MCF 10A (cell line): ENCODE measurements at regions of chr11 and their contacts with region 1.

Region 1: GRCh38 chr11:114262681-114263512 is 33.3 kb upstream of the NNMT start:
- DNase-seq: peak; percentile 51
- H3K4me3 Mint-ChIP-seq: no peak overlapping the region
- H3K27ac Mint-ChIP-seq: no peak overlapping the region
- H3K4me1 Mint-ChIP-seq: peaks cover 19% of the 10 kb centered on the region
- H3K27me3 Mint-ChIP-seq: no peaks in the 10 kb centered on the region
- CTCF ChIP-seq: peak; percentile 47

Region 2: DNA sequence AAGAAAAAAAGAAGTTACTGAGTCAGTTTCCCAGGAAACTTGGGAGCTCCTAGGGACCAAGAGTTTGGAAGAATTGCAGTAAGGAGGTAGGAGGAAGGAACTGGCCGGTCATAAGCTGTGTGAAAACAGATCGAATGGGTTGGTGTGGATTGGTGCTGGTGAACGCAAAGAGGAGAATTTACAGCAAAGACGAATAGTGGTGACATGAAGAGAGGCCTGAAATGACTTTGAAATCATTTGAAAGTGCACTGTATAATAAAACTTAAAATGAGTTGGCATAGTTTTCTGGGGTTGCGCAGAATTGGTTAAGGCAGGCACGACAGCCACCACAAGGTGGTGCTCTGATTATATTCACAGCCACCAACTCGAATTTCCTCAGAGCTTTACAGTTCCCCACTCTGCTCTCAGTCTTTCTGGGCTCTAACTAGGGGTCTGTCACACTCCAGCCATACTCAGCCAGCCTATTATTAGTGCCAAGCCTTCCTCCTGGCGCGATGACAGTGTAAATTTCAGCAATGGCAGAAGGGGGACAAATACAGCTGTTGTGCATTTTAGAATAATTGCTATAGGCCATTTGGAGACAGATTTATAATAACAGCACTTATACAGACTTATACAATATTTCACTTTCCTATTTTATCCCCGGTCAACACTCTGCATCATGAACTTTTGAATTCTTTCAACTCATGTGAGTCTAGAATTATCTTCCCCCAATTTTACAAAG is 366.6 kb before region 1 on chr11:
- CTCF ChIA-PET with region 1: interaction called, 23 read pairs
- POLR2A ChIA-PET with region 1: interaction called, 4 read pairs
- intact Hi-C with region 1: loop called (anchors 2 kb)
- DNase-seq: peak; percentile 42
- H3K4me3 Mint-ChIP-seq: no peak overlapping the region
- H3K27ac Mint-ChIP-seq: no peak overlapping the region
- H3K4me1 Mint-ChIP-seq: no peaks in the 10 kb centered on the region
- H3K27me3 Mint-ChIP-seq: peaks cover 8% of the 10 kb centered on the region
- CTCF ChIP-seq: peak; percentile 68

Region 3: GRCh38 chr11:113967361-113967760 is 295.5 kb before region 1 on chr11:
- CTCF ChIA-PET with region 1: no interaction called
- POLR2A ChIA-PET with region 1: no interaction called
- intact Hi-C with region 1: no loop called
- DNase-seq: no peak
- H3K4me3 Mint-ChIP-seq: no peak overlapping the region
- H3K27ac Mint-ChIP-seq: no peak overlapping the region
- H3K4me1 Mint-ChIP-seq: no peaks in the 10 kb centered on the region
- H3K27me3 Mint-ChIP-seq: peaks cover 84% of the 10 kb centered on the region
- CTCF ChIP-seq: no peak

Region 4: GRCh38 chr11:114026355-114026754 is 236.5 kb before region 1 on chr11:
- CTCF ChIA-PET with region 1: interaction called, 22 read pairs
- POLR2A ChIA-PET with region 1: interaction called, 4 read pairs
- intact Hi-C with region 1: no loop called
- DNase-seq: peak; percentile 34
- H3K4me3 Mint-ChIP-seq: no peak overlapping the region
- H3K27ac Mint-ChIP-seq: no peak overlapping the region
- H3K4me1 Mint-ChIP-seq: peaks cover 5% of the 10 kb centered on the region
- H3K27me3 Mint-ChIP-seq: peaks cover 36% of the 10 kb centered on the region
- CTCF ChIP-seq: no peak

Region 5: GRCh38 chr11:114059278-114059983 is 203.5 kb before region 1 on chr11 and contains the start of gene ZBTB16:
- CTCF ChIA-PET with region 1: interaction called, 26 read pairs
- POLR2A ChIA-PET with region 1: interaction called, 8 read pairs
- intact Hi-C with region 1: loop called (anchors 1 kb)
- DNase-seq: peak; percentile 86
- H3K4me3 Mint-ChIP-seq: peak within 1 kb of the TSS; percentile 95
- H3K27ac Mint-ChIP-seq: peak within 1 kb of the TSS; percentile 98
- H3K4me1 Mint-ChIP-seq: peaks cover 12% of the 10 kb centered on the region
- H3K27me3 Mint-ChIP-seq: no peaks in the 10 kb centered on the region
- CTCF ChIP-seq: peak; percentile 28
- total RNA-seq, gene ZBTB16: 70.4 and 75.3 TPM in 2 replicates

Region 6: DNA sequence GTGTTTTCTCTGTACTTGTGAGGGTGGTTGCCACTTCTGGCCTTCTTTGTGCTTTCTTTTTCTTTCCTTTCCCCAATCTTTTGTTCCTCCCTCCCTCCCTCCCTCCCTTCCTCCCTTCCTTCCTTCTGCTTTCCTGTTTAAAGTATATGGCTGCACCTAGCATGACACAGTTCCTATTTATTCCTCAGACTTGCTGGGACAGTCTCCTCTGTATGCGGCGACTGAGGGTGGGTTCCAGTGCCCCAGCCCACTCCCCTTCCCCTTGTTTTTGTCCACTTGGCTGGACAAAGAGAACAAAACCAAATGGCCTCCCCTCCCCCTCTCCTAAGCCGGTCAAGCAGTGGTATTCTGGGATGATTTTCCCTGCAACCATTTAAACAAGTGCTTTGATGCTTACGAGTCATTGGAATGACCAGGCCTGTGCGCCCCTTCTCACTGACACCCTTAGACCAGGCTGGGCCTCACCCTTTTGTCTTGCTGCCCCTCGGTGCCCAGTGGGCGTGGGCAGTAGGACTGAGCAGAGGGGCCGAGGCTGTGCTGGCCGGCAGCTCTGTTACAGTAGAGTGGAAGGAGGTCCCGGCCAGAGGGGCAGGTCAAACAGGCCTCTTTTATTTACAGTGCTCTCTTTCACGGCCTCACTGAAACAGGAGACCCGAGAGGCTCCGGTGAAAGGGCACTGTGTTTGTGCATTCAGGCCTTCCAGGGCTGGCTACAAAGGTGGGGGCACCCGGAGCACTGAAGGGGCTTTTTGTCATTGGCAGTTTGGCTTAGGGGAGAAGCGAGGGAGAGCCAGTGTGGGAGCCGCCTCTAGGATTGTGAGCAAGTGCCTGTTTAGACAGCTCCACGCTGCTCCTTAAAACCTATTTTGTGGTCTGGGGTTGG is 171.1 kb before region 1 on chr11:
- CTCF ChIA-PET with region 1: no interaction called
- POLR2A ChIA-PET with region 1: no interaction called
- intact Hi-C with region 1: no loop called
- DNase-seq: no peak
- H3K4me3 Mint-ChIP-seq: no peak overlapping the region
- H3K27ac Mint-ChIP-seq: peak overlapping the region; percentile 79
- H3K4me1 Mint-ChIP-seq: peaks cover 79% of the 10 kb centered on the region
- H3K27me3 Mint-ChIP-seq: no peaks in the 10 kb centered on the region
- CTCF ChIP-seq: no peak

Region 7: DNA sequence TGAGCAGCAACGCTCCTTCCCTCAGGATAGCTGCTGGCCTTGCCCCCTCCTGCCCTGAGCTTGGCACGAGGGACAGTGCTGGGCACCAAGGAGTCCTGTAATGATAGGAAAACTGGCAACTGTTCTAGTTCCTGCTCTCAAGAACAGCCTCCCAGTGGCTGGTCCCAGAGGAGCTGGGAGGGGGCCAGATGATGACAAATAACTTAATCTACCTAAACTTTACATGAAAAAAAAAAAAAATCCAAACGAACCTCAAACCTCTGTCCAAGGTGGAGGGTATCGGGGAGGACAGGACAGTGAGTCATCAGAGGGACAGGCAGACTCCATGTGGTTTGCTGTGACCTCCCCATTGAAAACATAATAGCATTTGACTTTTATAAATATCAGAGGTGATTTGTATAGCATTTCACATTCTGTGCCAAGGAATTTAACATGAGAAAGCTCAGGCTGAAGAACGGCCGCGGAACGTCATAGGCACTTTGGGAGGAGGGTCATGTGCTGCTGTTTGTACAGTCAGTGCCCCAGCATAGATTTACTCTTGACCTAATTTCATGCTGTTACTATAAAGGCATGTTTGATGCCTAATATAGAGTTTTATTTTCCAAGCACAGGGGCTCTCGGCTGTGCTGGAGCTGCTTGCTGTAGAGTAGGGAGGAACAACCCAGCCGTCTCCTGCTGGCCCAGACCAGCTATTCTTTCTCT is 64.9 kb before region 1 on chr11:
- CTCF ChIA-PET with region 1: interaction called, 5 read pairs
- POLR2A ChIA-PET with region 1: interaction called, 13 read pairs
- intact Hi-C with region 1: loop called (anchors 5 kb)
- DNase-seq: peak; percentile 95
- H3K4me3 Mint-ChIP-seq: peak overlapping the region; percentile 1
- H3K27ac Mint-ChIP-seq: peak overlapping the region; percentile 97
- H3K4me1 Mint-ChIP-seq: peaks cover 66% of the 10 kb centered on the region
- H3K27me3 Mint-ChIP-seq: no peaks in the 10 kb centered on the region
- CTCF ChIP-seq: no peak

Region 8: GRCh38 chr11:114250993-114251814 is 11.7 kb before region 1 on chr11:
- CTCF ChIA-PET with region 1: interaction called, 21 read pairs
- POLR2A ChIA-PET with region 1: interaction called, 5 read pairs
- intact Hi-C with region 1: no loop called
- DNase-seq: no peak
- H3K4me3 Mint-ChIP-seq: no peak overlapping the region
- H3K27ac Mint-ChIP-seq: peak overlapping the region; percentile 54
- H3K4me1 Mint-ChIP-seq: peaks cover 19% of the 10 kb centered on the region
- H3K27me3 Mint-ChIP-seq: no peaks in the 10 kb centered on the region
- CTCF ChIP-seq: no peak

Region 9: DNA sequence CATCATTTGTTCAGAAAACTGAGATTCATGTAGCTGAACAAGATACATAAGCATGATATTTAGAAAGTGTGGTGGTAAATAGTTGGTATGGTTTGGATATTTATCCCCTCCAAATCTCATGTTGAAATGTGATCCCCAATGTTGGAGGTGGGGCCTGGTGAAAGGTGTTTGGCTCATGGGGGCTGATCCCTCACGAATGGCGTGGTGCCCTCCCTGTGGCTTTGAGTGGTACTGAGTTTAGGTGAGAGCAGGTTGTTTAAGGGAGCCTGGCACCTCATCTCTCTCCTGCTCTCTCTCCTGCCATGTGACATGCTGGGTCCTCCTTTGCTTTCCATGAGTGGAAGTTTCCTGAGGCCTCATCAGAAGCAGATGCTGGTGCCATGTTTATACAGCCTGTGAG is 248.6 kb after region 1 on chr11:
- CTCF ChIA-PET with region 1: no interaction called
- POLR2A ChIA-PET with region 1: no interaction called
- intact Hi-C with region 1: no loop called
- DNase-seq: no peak
- H3K4me3 Mint-ChIP-seq: no peak overlapping the region
- H3K27ac Mint-ChIP-seq: no peak overlapping the region
- H3K4me1 Mint-ChIP-seq: no peaks in the 10 kb centered on the region
- H3K27me3 Mint-ChIP-seq: no peaks in the 10 kb centered on the region
- CTCF ChIP-seq: no peak